Aorta (tissue), 5 donors: ENCODE measurements at regions of chr3 and their contacts with region 1.

Region 1: DNA sequence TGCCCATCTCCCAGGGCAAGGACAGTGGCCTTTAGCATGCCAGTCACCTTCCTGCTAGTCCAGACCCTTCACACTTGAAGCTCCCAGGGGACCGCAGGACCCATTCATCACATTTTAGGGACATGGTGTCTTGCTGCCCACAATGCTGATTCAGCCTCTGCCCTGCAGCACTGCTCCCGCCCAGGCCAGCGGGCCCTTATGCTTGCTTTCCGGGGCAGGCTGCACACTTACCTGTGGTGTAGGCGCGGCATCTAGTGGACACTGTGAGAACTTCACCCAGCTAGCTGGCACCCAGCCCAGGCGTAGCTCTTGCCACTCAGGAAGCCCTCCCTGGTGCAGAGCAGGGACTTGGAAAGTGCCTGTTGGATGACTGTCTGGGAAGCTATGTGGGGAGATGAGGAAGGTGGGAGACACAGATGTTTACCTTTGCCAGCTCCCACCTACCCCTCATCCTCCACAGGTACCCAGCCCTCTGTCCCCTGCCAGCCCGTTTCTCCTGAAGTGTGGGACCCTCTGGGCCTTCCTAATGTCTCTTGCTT is 26.2 kb upstream of the NR2C2 start:
- DNase-seq: peak; percentile 87 to 94
- ATAC-seq: peak; percentile 94
- H3K4me3 ChIP-seq: no peak overlapping the region
- H3K27ac ChIP-seq: no peak overlapping the region
- H3K4me1 ChIP-seq: no peaks in the 10 kb centered on the region
- H3K27me3 ChIP-seq: no peaks in the 10 kb centered on the region

Region 2: DNA sequence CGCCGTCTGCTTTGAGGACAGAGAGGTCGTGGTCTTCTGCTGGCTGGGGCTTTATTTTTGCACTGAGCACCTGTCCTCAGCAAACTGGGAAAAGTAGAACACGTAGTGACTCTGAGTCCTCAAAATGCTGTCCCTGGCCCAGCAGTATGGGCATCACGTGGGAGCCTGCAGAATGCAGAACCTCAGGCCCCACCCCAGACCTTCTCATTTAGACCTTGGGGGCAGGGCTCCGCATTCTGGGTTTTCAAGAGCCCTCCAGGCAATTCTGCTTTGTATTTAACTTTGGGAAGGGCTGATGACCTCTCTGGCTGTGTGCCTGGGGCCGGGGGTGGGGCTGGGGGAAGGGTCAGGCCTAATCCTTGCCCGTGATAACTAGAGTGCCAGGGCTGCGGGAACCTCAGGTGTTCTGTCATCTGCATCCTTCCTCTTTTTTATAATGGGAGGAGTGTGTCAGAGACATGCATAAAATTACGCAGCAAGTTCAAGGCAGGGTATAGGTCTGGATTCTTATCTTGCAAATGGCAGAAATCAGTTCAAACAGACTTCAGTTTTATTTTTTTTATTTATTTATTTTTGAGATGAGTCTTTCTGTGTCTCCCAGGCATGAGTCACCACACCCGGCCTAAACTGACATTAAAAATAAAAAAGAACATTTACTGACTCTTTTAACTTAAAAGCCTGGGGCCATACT is 507.6 kb before region 1 on chr3:
- intact Hi-C with region 1: no loop called
- DNase-seq: no peak
- ATAC-seq: no peak
- H3K4me3 ChIP-seq: no peak overlapping the region
- H3K27ac ChIP-seq: no peak overlapping the region
- H3K4me1 ChIP-seq: no peaks in the 10 kb centered on the region
- H3K27me3 ChIP-seq: no peaks in the 10 kb centered on the region

Region 3: GRCh38 chr3:14672588-14672987 is 248.6 kb before region 1 on chr3:
- intact Hi-C with region 1: loop called (anchors 1 to 5 kb)
- DNase-seq: no peak
- ATAC-seq: no peak
- H3K4me3 ChIP-seq: no peak overlapping the region
- H3K27ac ChIP-seq: no peak overlapping the region
- H3K4me1 ChIP-seq: no peaks in the 10 kb centered on the region
- H3K27me3 ChIP-seq: no peaks in the 10 kb centered on the region

Region 4: DNA sequence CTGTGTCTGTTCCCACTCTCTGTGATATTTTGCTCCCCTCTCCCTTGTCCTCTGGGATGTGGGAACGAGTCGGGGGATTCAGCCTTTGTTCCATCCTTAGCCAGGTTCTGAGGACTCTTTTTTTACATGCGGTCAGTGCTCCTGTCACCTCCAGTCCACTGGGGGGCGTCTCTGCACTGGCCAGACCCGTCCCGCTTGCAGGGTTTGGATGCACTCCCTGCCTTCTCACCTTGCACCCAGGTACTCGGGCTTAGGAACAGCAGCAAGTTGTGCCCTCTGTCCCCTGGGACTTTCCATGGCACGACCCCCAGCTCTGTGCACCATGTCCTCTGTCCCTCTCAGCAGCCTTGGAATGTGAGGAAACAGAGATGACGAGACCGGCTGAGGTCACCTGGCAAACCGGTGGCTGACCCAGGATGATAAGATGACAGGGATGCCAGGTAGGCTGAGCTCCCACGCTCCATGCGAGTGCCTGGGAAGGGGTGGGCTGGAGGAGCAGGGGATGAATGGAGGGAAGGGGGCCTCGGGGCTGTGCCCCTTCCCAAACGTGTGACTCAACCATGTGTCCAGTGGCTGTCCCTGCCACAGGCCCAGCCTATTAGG is 129.7 kb before region 1 on chr3:
- intact Hi-C with region 1: loop called in 1 of 2 experiments (anchors 1 kb)
- DNase-seq: peak; percentile 67 to 86
- ATAC-seq: peak; percentile 70
- H3K4me3 ChIP-seq: no peak overlapping the region
- H3K27ac ChIP-seq: no peak overlapping the region
- H3K4me1 ChIP-seq: no peaks in the 10 kb centered on the region
- H3K27me3 ChIP-seq: no peaks in the 10 kb centered on the region